ENCODE measurements at regions of chr20 and their contacts with region 1.

Region 1: DNA sequence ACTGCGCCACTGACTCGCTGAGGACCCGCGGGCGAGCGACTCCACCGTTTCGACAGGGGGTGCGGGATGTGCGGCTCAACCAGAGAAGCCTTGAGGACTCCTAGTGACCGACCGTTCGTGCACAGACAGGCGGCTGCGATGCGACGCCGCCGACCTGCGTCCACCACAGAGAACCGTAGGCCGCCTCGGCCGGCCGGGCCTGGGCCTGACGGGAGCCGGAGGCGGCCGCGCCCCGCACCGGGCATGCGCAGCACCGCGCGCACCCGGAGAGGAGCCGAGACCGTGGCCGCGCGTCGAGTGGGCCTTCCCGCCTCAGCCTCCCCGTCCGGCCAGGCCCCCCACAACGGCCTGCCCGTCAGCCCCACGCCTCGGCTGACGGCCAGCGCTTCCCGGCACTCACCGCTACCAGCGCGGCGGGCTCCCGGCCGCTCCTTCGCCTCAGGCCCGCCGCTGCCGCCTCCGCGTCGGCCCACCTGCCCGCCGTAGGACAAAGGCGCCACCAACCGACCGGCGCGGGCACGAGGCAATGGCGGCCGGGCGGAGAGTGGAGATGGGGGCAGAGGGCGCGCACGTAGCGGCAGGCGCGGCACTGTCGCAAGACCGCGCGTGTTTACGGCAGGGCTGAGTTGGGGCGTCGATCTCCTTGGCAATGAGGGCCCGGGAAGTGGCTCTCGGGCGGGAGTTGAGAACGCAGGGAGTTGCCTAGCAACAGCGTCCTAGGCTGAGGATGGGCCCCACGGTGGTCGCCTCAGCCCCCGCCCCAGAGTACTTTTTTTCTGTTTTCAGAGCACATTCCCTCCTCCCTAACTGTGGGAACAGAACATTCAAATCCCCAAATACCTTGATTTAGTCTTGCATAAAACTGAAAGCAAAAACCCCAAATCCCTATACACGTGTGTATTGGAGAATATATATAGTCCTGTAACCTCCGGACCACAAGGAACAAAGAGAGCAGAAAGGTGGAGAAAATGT is at the start of gene NCOA5:
- DNase-seq: peak; percentile 96 to 98 (median 97)
- ATAC-seq: peak; percentile 96
- H3K4me3 ChIP-seq: peak within 1 kb of the TSS; percentile 74 to 84
- H3K27ac ChIP-seq: peak within 1 kb of the TSS; percentile 96 to 99
- H3K4me1 ChIP-seq: peaks cover 30 to 50% of the 10 kb centered on the region in 2 donors
- H3K27me3 ChIP-seq: no peaks in the 10 kb centered on the region
- CTCF ChIP-seq: peak in 1 of 2 donors; percentile 13
- polyA plus RNA-seq, gene NCOA5: 42.4 to 55.0 (median 51.5) TPM

Region 2: GRCh38 chr20:46013826-46014516 is 75.7 kb before region 1 on chr20:
- intact Hi-C with region 1: loop called in 1 of 2 experiments (anchors 5 kb)
- DNase-seq: peak in 3 of 4 donors; percentile 22 to 93 (median 32)
- ATAC-seq: peak; percentile 89
- H3K4me3 ChIP-seq: peak overlapping the region in 1 of 2 donors; percentile 21
- H3K27ac ChIP-seq: peak overlapping the region in 1 of 2 donors; percentile 46
- H3K4me1 ChIP-seq: peaks cover 4 to 54% of the 10 kb centered on the region in 2 donors
- H3K27me3 ChIP-seq: peaks cover 46 to 94% of the 10 kb centered on the region in 2 donors
- CTCF ChIP-seq: peak; percentile 70 to 91